ENCODE measurements at regions of chr6 and their contacts with region 1.

Region 1: DNA sequence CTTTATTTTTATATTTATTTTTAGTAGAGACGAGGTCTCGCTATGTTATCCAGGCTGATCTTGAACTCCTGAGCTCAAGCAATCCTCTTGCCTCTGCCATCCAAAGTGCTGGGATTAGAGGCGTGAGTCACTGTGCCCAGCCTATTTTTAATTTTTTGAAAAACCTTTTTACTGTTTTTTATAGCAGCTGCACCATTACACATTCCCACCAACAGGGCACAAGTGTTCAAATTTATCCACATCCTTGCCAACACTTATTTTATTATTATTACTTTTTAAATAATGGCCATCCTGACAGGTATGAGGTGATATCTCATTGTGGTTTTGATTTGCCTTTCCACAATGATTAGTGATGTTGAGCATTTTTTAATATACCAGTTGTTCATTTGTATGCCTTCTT is 42.5 kb downstream of the PACSIN1 start:
- DNase-seq: no peak
- H3K4me3 ChIP-seq: no peak overlapping the region
- CTCF ChIP-seq: no peak
- POLR2A ChIP-seq: no peak

Region 2: DNA sequence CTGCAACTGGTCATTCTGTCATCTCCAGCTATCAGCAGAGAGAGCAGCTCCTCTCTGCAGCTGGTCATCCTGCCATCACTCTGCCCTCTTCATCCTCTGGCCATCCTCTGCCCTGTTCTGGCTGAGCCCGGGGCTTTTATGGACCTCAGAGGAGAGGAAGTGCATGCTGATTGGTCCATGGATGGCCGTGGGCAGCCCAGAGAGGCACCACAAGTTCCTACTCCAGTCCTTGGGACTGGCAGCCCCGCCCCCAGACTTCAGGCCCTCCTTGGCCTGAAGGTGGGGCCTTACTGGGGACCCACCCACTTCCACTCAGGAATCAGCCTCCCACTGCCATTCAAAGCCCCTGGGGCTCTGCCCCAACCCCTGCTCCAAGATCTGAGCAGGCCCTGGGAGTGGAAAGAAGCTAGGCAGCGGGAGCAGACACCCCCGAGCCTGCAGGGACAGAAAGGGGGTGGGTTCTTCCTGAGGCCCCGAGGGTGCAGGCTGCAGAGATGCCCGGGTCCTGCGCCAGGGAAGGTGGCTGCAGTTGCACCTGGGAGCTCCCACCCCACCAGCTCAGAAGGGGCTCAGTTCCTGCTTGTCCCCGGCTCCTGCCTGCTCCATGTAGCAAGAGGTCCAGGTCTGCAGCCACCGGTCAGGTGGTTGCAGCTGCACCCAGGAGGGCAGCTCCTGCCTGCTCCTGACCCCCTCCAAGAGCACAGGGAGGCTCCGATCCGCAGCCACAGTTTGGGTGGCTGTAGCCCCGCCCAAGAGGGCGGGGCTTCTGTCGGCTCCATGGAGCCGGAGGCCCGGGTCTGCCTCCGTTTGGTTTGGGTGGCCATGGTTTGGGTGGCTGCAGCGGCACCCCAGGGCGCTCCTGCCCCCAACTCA is 305.9 kb before region 1 on chr6:
- intact Hi-C with region 1: no loop called
- DNase-seq: no peak
- H3K4me3 ChIP-seq: no peak overlapping the region
- CTCF ChIP-seq: no peak
- POLR2A ChIP-seq: no peak

Region 3: DNA sequence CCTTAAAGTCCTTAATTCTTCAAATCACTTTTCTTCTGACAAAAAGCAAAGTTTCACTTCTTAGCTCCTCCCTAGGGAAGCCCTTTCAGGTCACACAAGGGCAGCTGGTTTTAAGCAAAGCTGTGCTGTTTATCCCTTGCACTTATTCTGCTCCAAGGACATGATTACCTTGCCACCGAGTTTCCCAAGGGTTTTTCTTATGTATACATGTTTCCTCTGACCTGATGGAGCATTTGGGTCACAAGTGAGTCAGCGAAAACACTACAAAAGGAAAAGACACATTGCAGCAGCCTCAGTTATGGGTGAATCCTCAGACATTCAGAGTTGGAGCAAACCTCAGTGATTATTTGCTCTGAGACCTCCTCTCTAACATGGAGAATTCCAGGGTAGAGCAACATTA is 214.8 kb after region 1 on chr6:
- intact Hi-C with region 1: no loop called
- DNase-seq: no peak
- H3K4me3 ChIP-seq: no peak overlapping the region
- CTCF ChIP-seq: no peak
- POLR2A ChIP-seq: no peak

Region 4: GRCh38 chr6:36139991-36140710 is 1631.7 kb after region 1 on chr6:
- intact Hi-C with region 1: loop called (anchors 10 kb)
- DNase-seq: no peak
- H3K4me3 ChIP-seq: no peak overlapping the region
- CTCF ChIP-seq: no peak
- POLR2A ChIP-seq: no peak